HEK293T (cell line): ENCODE measurements at regions of chr3 and their contacts with region 1.

Region 1: DNA sequence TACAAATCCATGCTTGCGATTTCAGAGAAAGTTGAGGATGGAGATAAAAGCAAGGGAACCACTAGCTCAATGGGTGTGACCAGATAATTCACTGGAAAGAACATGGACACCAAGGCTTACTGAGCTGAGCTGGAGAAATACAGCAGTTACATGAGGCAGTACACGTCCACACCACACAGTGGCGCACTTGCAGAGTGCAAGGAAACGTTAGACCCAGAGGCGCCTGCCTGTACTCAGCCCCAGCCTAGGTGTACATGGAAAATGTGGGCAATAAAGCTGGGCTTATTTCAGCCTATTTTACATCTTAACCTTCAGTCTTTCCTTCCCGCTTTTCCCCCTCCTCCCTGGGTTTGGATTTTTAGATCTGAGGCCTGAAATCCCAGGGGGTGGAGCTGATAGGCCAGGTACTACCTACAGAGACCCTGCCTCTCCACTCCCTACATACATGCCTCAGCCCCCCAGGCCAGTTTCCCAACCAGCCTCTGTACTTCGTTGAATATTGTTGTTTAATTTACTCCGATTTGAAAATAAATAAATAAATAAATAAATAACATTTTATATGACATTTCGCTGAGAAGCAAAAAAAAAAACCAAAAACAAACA is 60.1 kb downstream of the PCOLCE2 start:
- DNase-seq: peak; percentile 91

Region 2: DNA sequence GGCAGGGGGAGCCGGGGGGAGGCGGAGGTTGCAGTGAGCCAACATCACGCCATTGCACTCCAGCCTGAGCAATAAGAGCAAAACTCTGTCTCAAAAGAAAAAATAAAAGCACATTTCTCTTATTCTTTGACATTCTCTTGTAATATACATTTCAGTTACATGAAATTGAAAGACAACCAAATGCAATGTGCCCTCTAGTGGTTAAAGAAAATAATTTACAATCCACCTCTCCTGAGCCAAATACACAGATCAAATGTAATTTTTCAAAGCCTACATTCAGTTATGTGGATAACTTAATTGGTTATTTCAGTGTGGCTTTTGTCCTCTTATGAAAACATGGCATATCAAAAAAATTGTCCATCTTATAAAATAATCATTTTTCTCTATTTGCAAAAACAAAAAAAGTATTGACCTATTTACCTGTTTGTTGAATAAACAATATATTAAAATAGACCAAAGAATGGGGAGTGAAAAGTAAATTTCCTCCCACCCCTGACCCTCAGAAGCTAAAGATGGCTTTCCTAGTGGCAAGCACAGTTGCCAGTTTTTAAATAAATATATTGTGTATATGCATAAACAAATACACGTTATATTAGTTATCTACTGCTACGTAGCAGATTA is 158.4 kb after region 1 on chr3:
- CTCF ChIA-PET with region 1: interaction called, 10 read pairs
- POLR2A ChIA-PET with region 1: no interaction called
- DNase-seq: peak; percentile 58

Region 3: GRCh38 chr3:142993958-142994442 is 165.2 kb after region 1 on chr3:
- CTCF ChIA-PET with region 1: interaction called, 15 read pairs
- POLR2A ChIA-PET with region 1: no interaction called
- DNase-seq: peak; percentile 72

Region 4: GRCh38 chr3:143001369-143002082 is 172.7 kb after region 1 on chr3 and contains the start of gene U2SURP:
- CTCF ChIA-PET with region 1: interaction called, 15 read pairs
- POLR2A ChIA-PET with region 1: interaction called, 8 read pairs
- DNase-seq: peak; percentile 97